ENCODE measurements at regions of chr5 and their contacts with region 1.

Region 1: DNA sequence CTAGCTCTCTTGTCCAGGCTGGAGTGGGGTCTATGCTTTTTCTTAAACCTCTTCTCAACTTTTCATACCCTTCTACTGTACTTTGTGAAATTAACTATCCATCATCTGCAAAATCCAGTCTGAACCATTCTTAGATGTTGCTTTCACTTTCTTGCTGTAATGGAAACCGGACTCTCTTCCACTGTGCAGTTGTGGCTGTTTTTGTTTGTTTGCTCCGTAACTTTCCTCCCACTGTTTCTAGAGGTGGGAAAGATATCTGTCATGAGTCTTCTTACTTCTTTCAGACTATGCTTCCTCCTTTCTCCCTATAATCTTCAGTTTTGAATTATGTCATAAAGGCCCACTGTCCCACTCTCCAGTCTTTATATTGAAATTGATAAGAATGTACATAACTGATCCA is 6.5 kb downstream of the TNPO1 start:
- DNase-seq: no peak
- H3K4me3 ChIP-seq: no peak overlapping the region
- CTCF ChIP-seq: no peak
- POLR2A ChIP-seq: no peak

Region 2: GRCh38 chr5:72611118-72611730 is 211.7 kb before region 1 on chr5:
- intact Hi-C with region 1: loop called (anchors 10 kb)
- DNase-seq: peak; percentile 45 to 91
- H3K4me3 ChIP-seq: no peak overlapping the region
- CTCF ChIP-seq: peak in 1 of 3 donors; percentile 44
- POLR2A ChIP-seq: no peak

Measured in lower leg skin (tissue), 4 donors.